H1 (cell line): ENCODE measurements at regions of chr14 and their contacts with region 1.

Region 1: GRCh38 chr14:24215495-24216344 is at the start of gene MDP1:
- DNase-seq: peak; percentile 73 to 82
- H3K4me3 ChIP-seq: peak within 1 kb of the TSS; percentile 77 to 94 (median 84)
- H3K27ac ChIP-seq: peak within 1 kb of the TSS; percentile 72
- H3K4me1 ChIP-seq: peaks cover 0 to 5% (median 2%) of the 10 kb centered on the region in 4 experiments; a peak in 1 of 7 replicates
- H3K27me3 ChIP-seq: no peaks in the 10 kb centered on the region
- CTCF ChIP-seq: peak; percentile 77 to 95 (median 92)
- EP300 ChIP-seq: no peak
- POLR2A ChIP-seq: peak; percentile 87 to 95
- RAD21 ChIP-seq: peak; percentile 65 to 73
- total RNA-seq, gene MDP1: 14.3 and 17.7 TPM in 2 replicates

Region 2: DNA sequence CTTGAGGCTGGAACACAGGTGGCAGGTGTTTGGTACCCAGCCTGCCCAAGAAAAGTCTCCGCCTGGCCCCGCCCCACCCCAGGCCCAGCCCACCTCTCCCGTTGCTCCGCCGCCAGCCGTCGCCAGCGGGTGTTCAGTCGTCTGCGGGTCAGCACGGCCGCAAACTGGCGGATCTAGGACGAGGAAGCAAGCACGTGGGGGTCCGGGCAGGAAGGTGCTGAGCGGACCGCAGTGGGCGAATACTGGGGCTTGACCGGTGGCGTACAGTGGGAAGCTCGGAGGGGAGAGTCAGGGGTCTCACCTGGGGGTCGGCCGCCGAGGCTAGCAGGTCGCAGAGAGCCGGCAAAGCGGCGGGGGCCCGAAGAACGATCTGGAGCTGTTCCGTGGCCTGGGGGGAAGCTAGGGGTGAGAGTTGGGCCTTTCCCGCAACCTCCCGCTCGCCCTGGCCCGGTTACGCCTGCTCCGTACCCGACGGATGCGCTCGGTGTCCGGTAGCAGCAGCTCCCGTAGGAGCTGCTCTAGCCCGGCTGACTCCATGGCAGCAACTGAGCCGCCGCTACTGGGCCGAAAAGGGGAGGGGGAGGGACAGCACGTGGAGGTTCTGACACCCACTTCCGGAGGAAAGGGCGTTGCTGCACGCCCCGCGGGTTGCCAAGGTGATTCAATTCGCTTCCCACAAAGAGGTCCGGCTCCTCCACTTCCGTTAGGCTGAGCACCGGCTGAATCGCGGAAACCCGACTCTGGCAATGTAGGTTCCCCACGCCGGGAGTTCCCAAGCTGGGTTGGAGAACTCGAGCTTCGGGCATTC is 27.3 kb before region 1 on chr14 and contains the start of gene IPO4:
- CTCF ChIA-PET with region 1: interaction called, 5 read pairs
- POLR2A ChIA-PET with region 1: interaction called, 119 read pairs
- DNase-seq: peak; percentile 93 to 95
- H3K4me3 ChIP-seq: peak within 1 kb of the TSS; percentile 75 to 91 (median 87)
- H3K27ac ChIP-seq: peak within 1 kb of the TSS; percentile 58; the same call in 1 of the 2 replicates
- H3K4me1 ChIP-seq: peaks cover 0 to 7% (median 4%) of the 10 kb centered on the region in 4 experiments; a peak in 6 of 7 replicates
- H3K27me3 ChIP-seq: no peaks in the 10 kb centered on the region
- CTCF ChIP-seq: no peak; a peak in 1 of 4 replicates
- EP300 ChIP-seq: peak in 1 of 2 experiments; percentile 93; a peak in 1 of 3 replicates
- POLR2A ChIP-seq: peak in 1 of 2 experiments; percentile 91; a peak in 2 of 3 replicates
- RAD21 ChIP-seq: peak; percentile 24 to 37; a peak in 2 of 4 replicates
- total RNA-seq, gene IPO4: 108 and 109 TPM in 2 replicates

Region 3: DNA sequence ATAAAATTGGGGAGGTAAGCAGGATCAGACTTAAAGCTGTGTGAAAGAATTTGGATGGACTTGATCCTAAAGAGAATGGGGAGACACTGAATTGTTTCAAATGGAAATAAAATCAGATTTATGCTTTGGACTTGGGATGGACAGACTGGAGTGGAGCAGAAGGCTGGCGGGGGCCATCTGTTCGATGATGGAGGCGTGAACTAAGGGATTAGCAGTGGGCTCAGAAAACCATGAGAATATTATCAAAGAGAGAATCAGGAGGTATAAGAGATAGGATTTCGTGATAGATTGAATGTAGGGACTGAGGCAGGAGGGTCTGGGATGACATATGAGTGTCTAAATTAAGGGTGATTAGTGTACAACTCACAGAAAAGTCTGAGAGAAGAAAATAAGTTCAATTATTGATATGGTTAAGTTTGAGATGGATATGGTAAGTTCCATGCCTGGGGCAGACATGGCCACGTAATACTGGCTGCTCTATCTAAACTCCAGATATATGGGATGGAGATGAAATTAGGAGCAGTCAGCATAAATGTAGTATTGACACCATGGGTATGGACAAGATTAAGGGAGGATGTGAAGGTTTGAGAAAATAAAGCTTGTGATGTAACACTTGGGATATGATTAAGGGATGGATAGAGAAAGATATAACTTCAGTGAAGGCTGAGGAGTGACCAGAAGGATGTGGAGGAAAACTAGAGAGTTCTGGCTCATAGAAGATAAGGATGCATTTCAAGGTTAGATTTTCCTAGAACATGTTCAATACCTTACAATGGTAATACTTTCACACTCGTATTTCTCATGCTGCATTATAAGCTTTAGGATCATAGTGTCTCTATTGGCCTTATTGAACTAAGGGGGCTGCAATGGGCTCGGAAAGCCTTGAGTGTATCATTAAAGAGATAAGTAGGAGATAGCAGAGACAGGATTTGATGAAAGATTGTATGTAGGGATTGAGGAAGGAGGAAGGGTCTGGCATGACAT is 11.3 kb before region 1 on chr14:
- CTCF ChIA-PET with region 1: interaction called, 9 read pairs
- POLR2A ChIA-PET with region 1: interaction called, 24 read pairs
- DNase-seq: no peak
- H3K4me3 ChIP-seq: no peak overlapping the region
- H3K27ac ChIP-seq: no peak overlapping the region
- H3K4me1 ChIP-seq: peaks cover 0 to 7% (median 4%) of the 10 kb centered on the region in 4 experiments; a peak in 3 of 7 replicates
- H3K27me3 ChIP-seq: no peaks in the 10 kb centered on the region
- CTCF ChIP-seq: no peak
- EP300 ChIP-seq: no peak
- POLR2A ChIP-seq: peak in 1 of 2 experiments; percentile 36; a peak in 1 of 3 replicates
- RAD21 ChIP-seq: no peak

Region 4: GRCh38 chr14:24271134-24271833 is 55.6 kb after region 1 on chr14 and contains the start of gene RABGGTA:
- CTCF ChIA-PET with region 1: interaction called, 4 read pairs
- POLR2A ChIA-PET with region 1: interaction called, 19 read pairs
- DNase-seq: peak; percentile 82 to 98
- H3K4me3 ChIP-seq: peak within 1 kb of the TSS; percentile 61 to 89 (median 82)
- H3K27ac ChIP-seq: peak within 1 kb of the TSS; percentile 96
- H3K4me1 ChIP-seq: peaks cover 0 to 4% (median 2%) of the 10 kb centered on the region in 4 experiments; a peak in 4 of 7 replicates
- H3K27me3 ChIP-seq: no peaks in the 10 kb centered on the region; a peak in 1 of 7 replicates
- CTCF ChIP-seq: peak; percentile 87 to 90 (median 90)
- EP300 ChIP-seq: peak; percentile 14 to 76; a peak in 2 of 3 replicates
- POLR2A ChIP-seq: peak in 1 of 2 experiments; percentile 96; a peak in 2 of 3 replicates
- RAD21 ChIP-seq: peak in 1 of 2 experiments; percentile 25; a peak in 2 of 4 replicates
- total RNA-seq, gene RABGGTA: 16.0 and 16.9 TPM in 2 replicates